Posterior vena cava (tissue), 2 donors: ENCODE measurements at regions of chr1 and their contacts with region 1.

Region 1: DNA sequence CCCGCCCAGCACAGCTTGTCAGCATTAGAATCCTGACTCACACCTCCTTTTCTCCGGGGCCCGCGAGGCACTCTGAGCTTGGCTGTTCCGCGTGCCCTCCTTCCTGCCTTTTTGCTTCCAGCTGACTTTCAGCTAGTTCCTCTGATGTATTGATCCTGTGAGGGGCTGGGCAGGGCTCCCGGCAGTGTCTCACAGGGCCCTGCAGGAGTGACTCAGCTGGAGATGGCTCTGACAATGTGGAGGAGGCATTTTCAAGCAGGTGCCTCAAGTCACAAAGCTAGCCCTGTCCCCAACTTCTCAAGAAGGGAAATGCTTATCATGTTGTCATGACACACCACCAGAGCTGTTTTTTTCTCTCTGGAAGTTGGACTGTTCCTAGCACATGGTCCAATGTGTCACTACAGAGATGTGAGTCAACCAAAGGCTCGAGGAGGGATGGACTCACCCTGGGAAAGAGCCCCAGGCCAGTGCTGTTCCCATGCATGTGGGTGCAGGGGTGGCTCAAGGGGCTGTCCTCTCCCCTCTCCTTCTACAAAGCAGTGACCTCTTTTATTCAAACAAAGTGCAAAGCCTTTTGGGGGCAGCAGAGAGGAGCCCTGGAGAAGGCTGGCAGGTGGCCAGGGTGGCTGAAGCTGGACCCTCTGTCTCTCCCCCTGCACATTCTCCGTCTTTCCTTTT is 30.6 kb downstream of the SYT6 start:
- DNase-seq: no peak

Region 2: DNA sequence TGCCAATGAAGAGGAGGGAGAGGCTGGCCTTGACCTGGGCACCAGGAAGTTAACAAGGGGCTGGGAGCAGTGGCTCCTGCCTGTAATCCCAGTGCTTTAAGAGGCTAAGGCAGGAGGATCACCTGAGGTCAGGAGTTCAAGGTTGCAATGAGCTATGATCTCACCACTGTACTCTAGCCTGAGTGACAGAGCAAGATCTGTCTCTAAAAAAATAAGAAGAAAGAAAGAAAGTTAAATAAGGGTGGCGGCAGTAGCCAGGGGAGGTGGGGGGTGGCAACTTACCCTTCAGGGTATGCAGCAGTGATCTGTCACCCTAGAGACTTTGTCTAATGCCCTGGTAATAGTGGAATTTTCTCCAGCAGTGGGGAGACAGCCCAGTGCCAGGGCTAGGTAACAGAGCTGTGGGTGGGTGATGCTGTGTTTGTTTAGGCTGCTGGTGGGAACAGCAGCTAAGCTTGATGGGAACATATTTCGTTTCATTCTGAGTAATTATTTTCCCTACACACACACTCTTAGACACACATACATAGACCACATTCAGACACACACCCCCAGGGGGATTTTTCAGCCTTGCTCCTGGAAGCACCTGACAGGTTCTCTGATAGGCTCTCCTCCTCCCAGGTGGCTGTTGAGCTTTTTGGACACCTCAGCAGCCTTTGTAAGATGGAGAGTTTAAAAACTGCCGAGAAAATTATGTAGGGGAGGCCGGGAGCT is 41.9 kb after region 1 on chr1:
- intact Hi-C with region 1: loop called in 1 of 2 experiments (anchors 5 kb)
- DNase-seq: no peak

Region 3: DNA sequence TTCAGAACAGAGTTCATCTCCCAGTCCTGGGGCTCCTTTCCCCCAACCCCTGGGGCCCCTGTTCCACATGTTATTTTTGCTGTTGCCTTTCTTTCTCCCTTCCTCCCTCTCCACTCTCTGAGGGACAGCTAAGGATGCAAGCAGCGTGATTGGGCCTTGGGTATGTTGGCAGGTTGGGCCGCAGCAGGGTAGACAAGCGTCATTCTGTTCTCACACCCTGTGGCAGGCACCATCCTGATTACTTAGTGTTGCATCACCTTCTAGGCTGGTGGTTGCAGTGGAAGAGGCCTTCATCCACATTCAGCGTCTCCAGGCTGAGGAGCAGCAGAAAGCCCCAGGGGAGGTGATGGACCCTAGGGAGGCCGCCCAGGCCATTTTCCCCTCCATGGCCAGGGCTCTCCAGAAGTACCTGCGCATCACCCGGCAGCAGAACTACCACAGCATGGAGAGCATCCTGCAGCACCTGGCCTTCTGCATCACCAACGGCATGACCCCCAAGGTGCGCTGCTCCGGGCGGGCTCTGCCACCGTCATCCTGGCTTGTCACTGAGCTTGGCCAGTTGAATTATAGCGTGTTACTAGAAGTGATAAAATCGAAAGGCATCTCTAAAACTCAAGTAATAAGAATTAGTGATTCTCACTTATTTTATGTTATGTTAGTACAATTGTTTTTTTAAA is 1562.1 kb after region 1 on chr1:
- intact Hi-C with region 1: loop called in 1 of 2 experiments (anchors 5 kb)
- DNase-seq: no peak